ENCODE measurements at regions of chr2 and their contacts with region 1.

Region 1: GRCh38 chr2:207960090-207960489 is 65.2 kb downstream of the PLEKHM3 start:
- DNase-seq: no peak
- ATAC-seq: no peak
- H3K4me3 ChIP-seq: no peak overlapping the region
- H3K27ac ChIP-seq: no peak overlapping the region
- H3K4me1 ChIP-seq: no peaks in the 10 kb centered on the region
- H3K27me3 ChIP-seq: no peaks in the 10 kb centered on the region
- CTCF ChIP-seq: no peak

Region 2: DNA sequence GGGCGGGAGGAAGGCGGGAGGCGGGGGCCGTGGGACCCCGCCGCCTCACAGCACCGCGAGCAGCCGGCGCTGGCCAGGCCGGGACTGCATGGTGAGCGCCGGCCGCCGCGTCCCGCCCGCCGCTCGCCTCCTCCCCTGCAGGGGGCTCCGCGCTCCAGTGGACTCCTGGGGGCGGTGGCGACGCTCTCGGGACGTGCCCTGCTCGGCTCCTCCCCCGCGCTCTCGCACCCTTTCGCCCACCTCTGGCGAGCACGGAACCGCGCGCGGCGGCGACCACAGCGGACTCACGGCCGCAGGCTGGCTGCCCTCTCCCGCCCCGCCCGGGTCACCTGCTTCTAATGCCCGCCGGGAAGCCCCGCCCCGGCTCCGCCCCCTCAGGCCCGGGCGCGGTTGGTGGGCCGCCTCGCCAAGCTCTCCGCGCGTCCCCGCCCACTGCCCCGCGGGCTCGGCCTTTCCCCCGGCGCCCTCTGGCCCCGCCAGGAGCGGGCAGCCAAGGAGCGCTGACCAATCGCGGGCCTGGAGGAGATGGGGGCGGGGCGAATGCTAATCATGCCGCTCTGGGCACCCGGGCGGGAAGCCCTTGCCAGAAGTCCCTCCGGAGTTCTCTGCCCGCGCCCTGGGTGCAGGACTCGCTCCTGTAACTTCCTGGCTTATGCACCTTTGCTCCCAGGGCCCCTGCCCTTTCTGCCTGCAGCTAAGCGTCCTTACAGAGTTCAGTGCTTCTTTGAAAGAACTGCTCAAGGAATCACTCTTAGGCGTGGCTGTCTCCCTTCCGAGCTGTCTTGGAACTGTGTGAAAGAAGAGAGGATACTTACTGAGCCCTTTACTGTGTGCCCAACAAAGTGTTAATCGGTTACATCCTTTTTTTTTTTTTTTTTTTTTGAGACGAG is 190.2 kb before region 1 on chr2 and contains the start of gene FZD5:
- intact Hi-C with region 1: loop called in 1 of 3 experiments (anchors 10 kb)
- DNase-seq: peak; percentile 98 to 99 (median 99)
- ATAC-seq: peak; percentile 84 to 90 (median 87)
- H3K4me3 ChIP-seq: peak within 1 kb of the TSS; percentile 53 to 90 (median 81)
- H3K27ac ChIP-seq: peak within 1 kb of the TSS; percentile 83 to 97 (median 90)
- H3K4me1 ChIP-seq: peaks cover 10 to 34% (median 15%) of the 10 kb centered on the region in 3 donors
- H3K27me3 ChIP-seq: no peaks in the 10 kb centered on the region
- CTCF ChIP-seq: peak; percentile 19 to 46 (median 44)
- total RNA-seq, gene FZD5: 13.7 to 23.0 (median 15.7) TPM